Activated CD4-positive, alpha-beta memory T cell treated with anti-CD3 and anti-CD28 coated beads, Interleukin-2, amount 10 ng/mL, durations not matched to agents 7 days and 5 days (primary cell): ENCODE measurements at regions of chrX and their contacts with region 1.

Region 1: DNA sequence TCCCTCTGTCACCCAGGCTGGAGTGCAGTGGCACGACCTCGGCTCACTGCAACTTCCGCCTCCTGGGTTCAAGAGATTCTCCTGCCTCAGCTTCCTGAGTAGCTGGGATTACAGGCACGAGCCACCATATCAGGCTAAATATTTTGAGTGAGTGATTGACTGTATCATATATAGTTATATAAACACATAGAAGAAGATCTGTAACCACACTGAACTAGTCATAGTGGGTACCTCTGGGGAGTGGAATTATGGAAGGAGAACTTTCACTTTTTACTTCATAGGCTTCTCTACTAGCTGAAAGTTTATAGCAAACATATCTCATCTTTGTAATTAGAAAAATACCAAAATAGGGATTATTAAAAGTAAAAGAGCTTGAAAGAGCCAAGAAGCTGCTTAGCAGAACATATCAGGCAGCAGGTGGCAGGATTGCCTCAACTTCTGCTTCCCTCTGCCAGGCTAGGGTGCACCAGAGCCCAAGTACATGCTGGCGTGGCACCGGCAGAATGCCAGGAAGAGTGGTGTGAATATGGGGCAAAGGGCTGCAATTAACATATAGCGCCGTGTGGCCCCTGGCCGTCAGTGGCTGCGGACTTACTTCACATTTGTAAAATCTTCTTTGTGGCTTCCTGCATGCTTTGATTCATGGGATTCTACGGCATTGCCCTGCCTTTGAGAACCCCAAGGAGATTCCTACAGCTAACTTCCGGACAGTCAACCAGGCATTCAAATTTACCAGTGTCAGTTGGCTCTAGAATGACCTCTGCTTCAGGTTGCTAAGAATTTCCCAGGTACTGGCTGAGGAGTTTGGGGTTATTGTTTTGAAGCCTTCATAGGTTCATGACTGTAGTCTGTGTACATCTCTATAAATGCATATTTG is 39.4 kb upstream of the CD40LG start:
- DNase-seq: peak; percentile 72
- H3K4me3 Mint-ChIP-seq: peak overlapping the region; percentile 41
- H3K27ac Mint-ChIP-seq: peak overlapping the region; percentile 67
- H3K4me1 Mint-ChIP-seq: peaks cover 57% of the 10 kb centered on the region
- H3K27me3 Mint-ChIP-seq: no peaks in the 10 kb centered on the region

Region 2: DNA sequence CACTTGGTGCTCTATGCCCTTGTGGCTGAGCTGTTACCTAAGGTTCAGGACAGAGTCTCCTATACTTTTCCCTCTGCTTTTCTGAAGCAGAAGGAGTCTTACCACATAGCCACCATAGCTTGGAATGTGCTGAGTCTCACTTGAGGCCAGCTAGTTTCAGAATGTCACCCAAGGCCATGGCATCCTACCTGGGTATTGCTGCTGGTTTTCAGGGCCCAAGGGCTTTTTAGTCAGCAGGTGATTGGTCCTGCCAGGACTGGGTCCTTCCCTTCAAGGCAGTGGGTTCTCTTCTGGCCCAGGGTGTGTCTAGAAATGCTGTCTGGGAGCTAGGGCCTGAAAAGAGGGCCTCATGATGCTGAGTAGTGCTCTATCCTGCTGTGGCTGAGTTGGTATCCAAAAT is 43.8 kb before region 1 on chrX:
- CTCF ChIA-PET with region 1: no interaction called
- POLR2A ChIA-PET with region 1: no interaction called
- DNase-seq: no peak
- H3K4me3 Mint-ChIP-seq: no peak overlapping the region
- H3K27ac Mint-ChIP-seq: no peak overlapping the region
- H3K4me1 Mint-ChIP-seq: peaks cover 5% of the 10 kb centered on the region
- H3K27me3 Mint-ChIP-seq: peaks cover 8% of the 10 kb centered on the region

Region 3: GRCh38 chrX:136577552-136577951 is 31.0 kb before region 1 on chrX:
- CTCF ChIA-PET with region 1: interaction called, 12 read pairs
- POLR2A ChIA-PET with region 1: interaction called, 3 read pairs
- DNase-seq: peak; percentile 80
- H3K4me3 Mint-ChIP-seq: peak overlapping the region; percentile 31
- H3K27ac Mint-ChIP-seq: peak overlapping the region; percentile 76
- H3K4me1 Mint-ChIP-seq: peaks cover 39% of the 10 kb centered on the region
- H3K27me3 Mint-ChIP-seq: no peaks in the 10 kb centered on the region

Region 4: DNA sequence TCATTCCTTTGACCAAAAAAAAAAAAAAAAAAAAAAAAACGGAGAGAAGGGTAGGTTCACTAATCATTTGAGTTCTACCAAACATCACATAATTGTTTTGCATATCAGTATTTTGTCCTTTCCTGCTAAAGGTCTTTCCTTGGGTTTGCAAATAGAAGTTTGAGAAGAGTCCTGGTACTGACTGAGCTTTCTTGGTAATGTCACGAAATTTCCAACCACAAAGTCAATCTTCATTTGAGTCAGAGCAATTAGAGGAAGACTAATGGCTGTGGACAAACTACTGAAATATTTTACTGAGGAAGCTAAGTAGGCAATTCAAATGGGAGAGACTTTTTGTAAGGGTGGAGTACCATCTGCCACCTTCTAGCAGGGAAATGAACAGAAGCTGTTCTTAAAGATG is 17.7 kb after region 1 on chrX:
- CTCF ChIA-PET with region 1: interaction called, 6 read pairs
- POLR2A ChIA-PET with region 1: interaction called, 10 read pairs
- DNase-seq: no peak
- H3K4me3 Mint-ChIP-seq: peak overlapping the region; percentile 10
- H3K27ac Mint-ChIP-seq: peak overlapping the region; percentile 95
- H3K4me1 Mint-ChIP-seq: peaks cover 99% of the 10 kb centered on the region
- H3K27me3 Mint-ChIP-seq: no peaks in the 10 kb centered on the region

Region 5: GRCh38 chrX:136658151-136658550 is 49.6 kb after region 1 on chrX:
- CTCF ChIA-PET with region 1: interaction called, 10 read pairs
- POLR2A ChIA-PET with region 1: interaction called, 34 read pairs
- DNase-seq: no peak
- H3K4me3 Mint-ChIP-seq: peak overlapping the region; percentile 96
- H3K27ac Mint-ChIP-seq: peak overlapping the region; percentile 91
- H3K4me1 Mint-ChIP-seq: peaks cover 96% of the 10 kb centered on the region
- H3K27me3 Mint-ChIP-seq: no peaks in the 10 kb centered on the region

Region 6: DNA sequence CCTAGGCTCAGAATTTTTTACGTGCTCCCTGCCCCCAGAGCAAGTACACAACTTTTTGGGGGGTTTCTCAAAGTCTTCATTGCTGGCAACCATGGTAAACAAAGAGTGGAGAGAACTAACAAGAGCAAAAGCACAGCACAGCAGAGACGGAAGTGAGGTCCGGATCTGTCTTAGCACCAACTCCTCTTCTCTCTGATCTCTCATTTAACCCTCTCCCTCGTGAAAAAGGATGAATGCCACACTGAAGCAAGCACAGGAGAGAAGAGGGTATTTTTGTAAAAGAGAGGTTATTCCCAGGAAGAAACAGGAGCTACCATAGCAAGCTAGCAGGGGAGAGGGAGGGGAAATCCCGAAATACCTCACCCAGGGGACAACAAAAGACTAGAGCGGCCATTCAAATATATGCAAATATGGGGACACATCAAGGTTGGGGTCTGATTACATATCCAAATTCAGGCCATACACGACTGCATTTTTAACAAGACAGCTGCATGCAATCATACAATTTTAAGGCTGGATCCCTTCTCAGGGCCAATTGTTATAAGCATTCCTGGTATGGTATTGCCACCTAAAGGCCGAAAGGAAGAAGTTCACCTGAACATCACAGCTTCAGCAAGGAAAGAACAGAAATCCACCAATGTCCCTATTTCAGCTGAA is 86.0 kb after region 1 on chrX:
- CTCF ChIA-PET with region 1: interaction called, 46 read pairs
- POLR2A ChIA-PET with region 1: interaction called, 18 read pairs
- DNase-seq: peak; percentile 28
- H3K4me3 Mint-ChIP-seq: peak overlapping the region; percentile 71
- H3K27ac Mint-ChIP-seq: peak overlapping the region; percentile 98
- H3K4me1 Mint-ChIP-seq: peaks cover 82% of the 10 kb centered on the region
- H3K27me3 Mint-ChIP-seq: no peaks in the 10 kb centered on the region